Transverse colon (tissue), 4 donors: ENCODE measurements at regions of chr4 and their contacts with region 1.

Region 1: DNA sequence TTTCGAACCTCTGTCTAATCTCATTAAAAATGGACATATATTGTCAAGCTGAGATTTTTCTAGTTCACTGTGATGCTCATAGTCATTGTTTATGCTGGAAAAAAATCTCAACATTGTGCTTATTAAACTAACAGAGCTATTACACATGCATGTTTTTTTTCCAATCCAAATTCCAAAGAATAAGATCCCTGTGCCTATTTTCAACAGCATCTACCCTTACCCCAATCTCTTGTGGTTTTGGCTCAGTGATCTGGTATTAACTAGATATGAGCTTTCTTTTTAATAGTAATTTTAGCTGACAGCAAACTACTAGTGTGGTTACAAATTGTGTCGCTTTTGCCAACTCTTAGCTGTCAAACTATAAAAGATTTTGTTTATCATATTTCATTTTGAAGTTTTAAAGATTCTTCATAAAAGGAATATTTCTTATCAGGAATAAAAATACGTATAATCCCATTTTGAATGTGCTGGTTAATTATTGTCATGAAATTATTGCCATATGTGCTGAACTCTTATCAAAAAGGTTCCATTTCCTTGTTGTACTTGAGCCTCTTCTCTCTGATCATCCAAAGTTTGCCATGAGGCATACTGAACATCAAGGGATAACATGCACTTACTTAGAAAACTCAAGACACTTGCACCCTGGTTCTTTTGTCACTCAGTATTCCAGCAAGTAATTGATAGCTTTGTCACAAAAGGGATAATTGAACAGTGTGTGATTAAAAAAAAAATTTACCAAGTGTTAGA is 241.2 kb downstream of the ARHGAP24 start:
- DNase-seq: no peak
- H3K4me3 ChIP-seq: no peak overlapping the region
- H3K27ac ChIP-seq: no peak overlapping the region
- H3K4me1 ChIP-seq: peaks cover 0 to 11% (median 0%) of the 10 kb centered on the region in 4 donors
- H3K27me3 ChIP-seq: no peaks in the 10 kb centered on the region
- CTCF ChIP-seq: no peak
- EP300 ChIP-seq: no peak
- POLR2A ChIP-seq: no peak

Region 2: DNA sequence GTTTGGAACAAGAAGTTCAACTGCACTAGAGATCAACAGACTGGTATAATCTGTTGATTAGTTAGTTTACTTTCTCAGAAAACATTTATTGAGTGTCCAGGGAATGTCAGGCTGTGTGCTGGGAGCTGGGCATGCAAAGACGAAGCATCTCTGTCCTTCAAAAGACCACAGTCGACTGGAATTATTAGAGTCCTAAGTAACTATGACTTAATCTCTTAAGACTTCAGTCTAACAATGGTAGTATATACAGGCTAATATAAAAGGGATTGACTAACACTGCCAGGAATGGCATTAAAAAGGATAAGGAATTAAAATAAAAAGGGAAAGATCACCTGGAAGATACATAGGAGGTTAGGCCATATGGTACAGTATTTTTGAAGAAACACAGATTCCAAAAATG is 878.4 kb before region 1 on chr4:
- in situ Hi-C with region 1: no loop called
- intact Hi-C with region 1: loop called (anchors 5 kb)
- DNase-seq: no peak
- H3K4me3 ChIP-seq: no peak overlapping the region
- H3K27ac ChIP-seq: no peak overlapping the region
- H3K4me1 ChIP-seq: no peaks in the 10 kb centered on the region
- H3K27me3 ChIP-seq: no peaks in the 10 kb centered on the region
- CTCF ChIP-seq: no peak
- EP300 ChIP-seq: no peak
- POLR2A ChIP-seq: no peak

Region 3: GRCh38 chr4:85732124-85732523 is 16.0 kb after region 1 on chr4:
- in situ Hi-C with region 1: no loop called
- intact Hi-C with region 1: loop called (anchors 1 kb)
- DNase-seq: no peak
- H3K4me3 ChIP-seq: no peak overlapping the region
- H3K27ac ChIP-seq: no peak overlapping the region
- H3K4me1 ChIP-seq: peaks cover 0 to 8% (median 2%) of the 10 kb centered on the region in 4 donors
- H3K27me3 ChIP-seq: no peaks in the 10 kb centered on the region
- CTCF ChIP-seq: no peak
- EP300 ChIP-seq: no peak
- POLR2A ChIP-seq: no peak